Common myeloid progenitor, CD34-positive (primary cell): ENCODE measurements at regions of chr19 and their contacts with region 1.

Region 1: DNA sequence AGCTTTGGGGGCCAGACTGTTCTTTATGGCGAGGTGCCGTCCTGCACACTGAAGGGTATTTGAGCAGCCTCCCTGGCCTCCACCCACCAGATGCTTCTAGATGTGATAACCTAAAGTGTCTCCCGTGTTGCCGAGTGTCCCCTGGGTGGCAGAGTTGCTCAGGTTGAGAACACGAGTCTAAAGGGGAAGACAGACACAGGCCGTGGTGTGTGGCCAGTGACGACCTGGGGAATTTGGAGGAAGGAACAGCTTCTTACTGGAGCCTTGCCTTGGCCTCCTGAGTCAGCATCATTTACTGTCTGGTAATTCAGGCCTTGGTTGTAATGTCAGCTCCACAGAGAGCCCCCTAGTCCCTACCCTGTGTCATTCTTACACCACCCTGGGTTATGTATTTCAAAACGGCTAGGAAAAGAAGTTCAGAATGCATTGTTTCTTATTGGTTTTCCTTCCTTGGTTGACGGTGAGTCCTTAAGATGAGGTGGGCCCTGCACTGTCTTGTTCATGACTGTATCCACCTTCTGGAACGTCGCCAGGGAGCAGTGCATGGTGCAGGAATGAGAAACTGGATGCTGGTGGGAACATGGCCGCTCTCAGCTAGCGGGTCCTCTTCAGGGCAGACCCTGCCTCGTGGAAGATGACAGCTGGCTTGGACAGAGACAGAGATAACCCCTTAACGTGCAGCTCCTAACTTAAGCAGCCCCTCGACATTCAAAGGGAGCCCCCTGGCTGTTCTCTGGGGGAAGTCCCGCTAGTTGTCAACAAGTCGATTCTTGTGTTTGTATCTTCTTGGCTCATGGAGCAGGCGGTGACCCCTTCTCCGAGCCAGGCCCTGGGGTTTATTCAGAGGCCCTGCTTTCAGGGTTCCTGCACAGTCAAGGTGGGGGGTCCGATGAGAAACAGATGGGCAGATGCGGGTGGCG is 7.2 kb downstream of the SIN3B start:
- DNase-seq: peak; percentile 78 to 93 (median 92)
- H3K4me3 ChIP-seq: no peak overlapping the region
- H3K27ac ChIP-seq: no peak overlapping the region
- H3K4me1 ChIP-seq: peaks cover 0 to 8% (median 6%) of the 10 kb centered on the region in 4 experiments
- H3K27me3 ChIP-seq: no peaks in the 10 kb centered on the region

Region 2: DNA sequence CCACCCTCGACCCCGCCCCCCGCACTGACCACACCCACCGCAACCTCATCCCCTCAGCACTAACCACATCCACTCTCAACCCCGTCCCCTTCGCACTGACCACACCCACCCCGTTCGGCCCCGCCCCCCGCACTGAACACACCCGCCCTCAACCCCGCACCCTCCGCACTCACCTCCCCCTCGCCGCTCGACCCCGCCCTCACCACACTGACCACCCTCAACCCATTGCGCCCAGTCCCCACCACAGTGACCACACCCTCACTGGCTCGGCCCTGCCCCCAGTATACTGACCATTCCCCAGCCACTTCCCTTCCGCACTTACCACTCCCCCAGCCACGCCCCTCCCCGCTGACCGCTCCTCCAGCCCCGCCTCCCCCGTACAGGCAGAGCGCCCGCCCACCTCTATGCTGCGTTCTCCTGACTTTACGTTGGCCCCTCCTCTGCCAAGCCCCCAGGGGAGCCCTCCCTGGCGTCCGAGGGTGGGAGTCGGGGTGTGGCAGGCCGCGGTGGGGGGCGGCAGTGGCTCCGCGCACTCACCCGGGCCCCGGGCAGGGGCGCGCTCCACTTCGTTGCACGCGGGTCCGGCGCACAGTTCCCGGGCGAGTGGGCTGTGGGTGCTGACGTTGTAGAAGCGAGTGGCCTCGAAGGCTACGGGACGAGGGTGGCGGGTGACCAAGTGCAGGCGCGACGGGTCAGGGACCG is 60.9 kb after region 1 on chr19:
- CTCF ChIA-PET with region 1: interaction called, 33 read pairs
- POLR2A ChIA-PET with region 1: no interaction called
- DNase-seq: peak; percentile 73 to 79 (median 74)
- H3K4me3 ChIP-seq: peak overlapping the region in 6 of 7 experiments; percentile 15 to 61 (median 50)
- H3K27ac ChIP-seq: no peak overlapping the region
- H3K4me1 ChIP-seq: peaks cover 10 to 52% (median 45%) of the 10 kb centered on the region in 4 experiments
- H3K27me3 ChIP-seq: peaks cover 1 to 37% (median 9%) of the 10 kb centered on the region in 5 experiments

Region 3: DNA sequence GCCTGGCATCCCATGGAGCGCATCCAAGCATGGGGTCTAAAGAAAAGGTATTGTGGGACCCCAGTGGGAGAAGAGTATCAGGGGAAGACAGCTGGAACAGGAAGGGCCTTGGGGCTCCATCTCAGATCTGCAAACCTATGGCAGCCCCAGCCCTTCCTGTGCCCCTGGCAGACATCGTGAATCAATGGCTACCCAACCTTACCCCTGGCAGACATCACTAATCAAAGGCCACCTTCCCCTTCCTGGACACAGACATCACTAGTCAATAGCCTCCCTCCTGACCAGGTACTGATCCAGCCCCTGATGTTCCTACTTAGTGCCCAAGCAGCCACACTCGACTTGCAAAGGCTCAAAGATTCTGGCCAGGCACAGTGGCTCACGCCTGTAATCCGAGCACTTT is 68.2 kb after region 1 on chr19:
- CTCF ChIA-PET with region 1: interaction called, 33 read pairs
- POLR2A ChIA-PET with region 1: no interaction called
- DNase-seq: no peak
- H3K4me3 ChIP-seq: no peak overlapping the region
- H3K27ac ChIP-seq: no peak overlapping the region
- H3K4me1 ChIP-seq: peaks cover 0 to 5% (median 4%) of the 10 kb centered on the region in 4 experiments
- H3K27me3 ChIP-seq: peaks cover 0 to 5% (median 0%) of the 10 kb centered on the region in 5 experiments